Activated CD8-positive, alpha-beta T cell treated with anti-CD3 and anti-CD28 coated beads for 36 hours (primary cell): ENCODE measurements at regions of chr6 and their contacts with region 1.

Region 1: DNA sequence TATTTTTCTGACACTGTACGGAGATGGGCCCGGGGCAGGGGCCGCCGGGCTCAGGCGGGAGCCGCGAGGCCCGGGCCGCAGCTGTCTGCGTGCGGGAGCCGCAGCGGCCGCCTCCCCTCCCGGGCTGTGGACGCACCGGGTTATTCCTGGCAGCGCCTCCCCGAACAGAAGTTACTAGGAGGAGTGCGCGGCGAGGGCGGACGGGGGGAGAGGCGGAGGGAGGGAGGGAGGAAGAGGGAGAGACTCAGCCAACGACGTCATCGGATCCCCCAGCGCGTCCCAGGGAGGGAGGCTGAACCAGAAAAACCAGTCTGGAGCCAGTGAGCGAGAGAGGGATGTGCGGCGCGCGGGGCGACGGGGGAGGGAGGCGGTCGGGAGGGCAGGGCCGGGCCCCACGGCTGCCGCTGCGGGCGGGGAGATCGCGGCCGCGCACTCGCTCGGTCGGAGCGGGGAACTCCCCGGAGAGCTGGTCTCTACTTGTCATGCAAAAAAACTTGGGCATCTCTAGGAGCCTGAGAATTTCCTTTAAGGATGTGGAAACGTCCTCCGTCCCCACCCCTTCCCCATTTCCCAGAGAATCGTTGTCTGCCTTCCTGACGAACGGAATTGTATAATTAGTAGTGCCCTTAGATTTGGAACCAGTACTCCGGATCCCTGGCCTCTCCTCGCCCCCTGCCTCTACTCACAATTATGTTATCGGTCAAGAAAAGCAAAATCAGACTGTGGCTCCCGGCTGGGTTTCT is 1.4 kb upstream of the HIVEP2 start:
- DNase-seq: peak; percentile 93
- ATAC-seq: peak; percentile 32
- H3K4me3 Mint-ChIP-seq: peak overlapping the region; percentile 91
- H3K27ac Mint-ChIP-seq: peak overlapping the region; percentile 94
- H3K4me1 Mint-ChIP-seq: peaks cover 34% of the 10 kb centered on the region
- H3K27me3 Mint-ChIP-seq: peaks cover 2% of the 10 kb centered on the region
- CTCF ChIP-seq: no peak

Region 2: GRCh38 chr6:142692942-142693341 is 253.4 kb before region 1 on chr6:
- CTCF ChIA-PET with region 1: interaction called, 4 read pairs
- POLR2A ChIA-PET with region 1: no interaction called
- intact Hi-C with region 1: loop called (anchors 5 kb)
- DNase-seq: peak; percentile 73
- ATAC-seq: peak; percentile 84
- H3K4me3 Mint-ChIP-seq: no peak overlapping the region
- H3K27ac Mint-ChIP-seq: no peak overlapping the region
- H3K4me1 Mint-ChIP-seq: peaks cover 24% of the 10 kb centered on the region
- H3K27me3 Mint-ChIP-seq: no peaks in the 10 kb centered on the region
- CTCF ChIP-seq: peak; percentile 82

Region 3: DNA sequence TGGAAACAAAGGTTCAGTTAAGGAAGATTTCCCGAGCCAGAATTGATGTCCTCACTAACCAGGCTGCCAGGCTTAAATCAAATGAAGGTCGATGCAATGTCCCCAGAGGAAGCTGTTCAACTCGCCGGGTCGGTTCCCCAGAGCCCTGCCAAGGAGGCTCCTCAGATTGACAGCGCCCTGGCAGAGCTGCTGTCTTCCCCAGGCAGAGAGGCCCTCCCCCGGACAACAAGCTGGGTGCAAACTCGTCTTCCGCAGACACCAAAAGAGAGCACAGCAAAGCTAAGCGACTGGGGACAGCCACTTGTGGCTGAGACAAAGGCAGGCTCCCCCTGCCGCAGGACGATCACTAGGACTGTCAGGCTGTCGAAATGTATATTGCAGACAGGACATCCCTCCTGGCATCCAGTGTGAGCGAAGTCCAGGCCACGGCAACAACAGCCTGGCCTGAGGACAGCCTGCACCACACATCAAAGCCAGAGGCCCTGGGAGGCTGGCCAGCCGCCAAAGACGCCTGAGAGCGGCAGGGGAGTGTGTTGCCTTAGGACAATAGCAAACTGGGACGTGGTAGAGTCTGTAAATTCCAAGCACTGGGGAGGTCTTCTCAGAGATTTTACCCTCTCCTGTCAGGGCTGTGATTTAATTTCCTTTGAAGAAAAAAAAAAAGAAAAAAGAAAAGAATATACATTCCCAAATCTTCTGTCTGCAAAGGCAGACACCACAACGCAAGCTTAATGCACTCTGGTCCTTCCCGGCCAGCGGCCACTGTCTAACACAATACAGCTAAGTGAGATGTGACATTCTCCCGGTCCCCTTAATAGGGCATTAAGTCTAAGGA is 100.5 kb before region 1 on chr6:
- CTCF ChIA-PET with region 1: interaction called, 5 read pairs
- POLR2A ChIA-PET with region 1: interaction called, 11 read pairs
- intact Hi-C with region 1: loop called (anchors 2 kb)
- DNase-seq: peak; percentile 71
- ATAC-seq: peak; percentile 29
- H3K4me3 Mint-ChIP-seq: peak overlapping the region; percentile 67
- H3K27ac Mint-ChIP-seq: peak overlapping the region; percentile 92
- H3K4me1 Mint-ChIP-seq: peaks cover 88% of the 10 kb centered on the region
- H3K27me3 Mint-ChIP-seq: no peaks in the 10 kb centered on the region
- CTCF ChIP-seq: no peak

Region 4: DNA sequence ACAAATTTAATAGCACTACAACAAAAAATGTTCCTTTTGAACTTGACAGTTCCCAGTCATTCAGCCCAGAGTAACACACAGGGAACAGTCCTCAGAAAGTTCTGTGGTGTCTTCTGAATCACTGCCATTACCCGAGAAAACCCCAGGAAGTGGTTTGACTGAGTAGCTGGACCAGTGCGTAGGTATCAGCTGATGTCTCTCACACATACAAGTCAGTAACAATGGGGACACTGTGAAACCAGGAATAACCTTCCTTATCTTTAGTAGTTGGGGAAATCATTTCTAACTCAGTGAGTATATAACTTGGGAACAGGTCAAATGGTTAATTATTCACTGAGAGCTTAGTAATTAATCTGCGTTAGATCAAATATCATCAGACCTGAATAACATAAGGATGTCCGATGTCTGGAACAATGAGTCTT is 74.4 kb before region 1 on chr6:
- CTCF ChIA-PET with region 1: interaction called, 4 read pairs
- POLR2A ChIA-PET with region 1: interaction called, 11 read pairs
- intact Hi-C with region 1: no loop called
- DNase-seq: peak; percentile 79
- ATAC-seq: peak; percentile 91
- H3K4me3 Mint-ChIP-seq: peak overlapping the region; percentile 43
- H3K27ac Mint-ChIP-seq: peak overlapping the region; percentile 75
- H3K4me1 Mint-ChIP-seq: peaks cover 87% of the 10 kb centered on the region
- H3K27me3 Mint-ChIP-seq: no peaks in the 10 kb centered on the region
- CTCF ChIP-seq: no peak

Region 5: DNA sequence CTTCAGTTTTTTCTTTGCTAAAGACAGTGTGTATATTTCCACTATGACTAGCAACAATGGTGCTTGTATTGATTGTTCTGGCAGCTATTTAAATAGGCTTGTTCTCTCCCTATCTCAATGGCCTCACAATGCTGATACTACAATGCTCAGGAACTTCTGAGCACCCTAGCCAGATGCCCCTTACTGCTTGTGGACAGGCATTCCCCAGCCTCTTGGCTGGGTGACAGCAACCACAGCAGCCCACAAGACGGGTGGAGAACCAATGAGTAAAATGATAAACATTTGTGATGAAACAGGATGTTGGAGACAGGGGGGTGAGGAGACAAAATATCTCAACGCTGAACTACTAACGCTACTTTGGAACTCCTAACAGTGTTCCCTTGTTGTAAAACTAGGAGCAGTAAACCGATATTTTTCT is 43.7 kb before region 1 on chr6:
- CTCF ChIA-PET with region 1: interaction called, 3 read pairs
- POLR2A ChIA-PET with region 1: interaction called, 18 read pairs
- intact Hi-C with region 1: loop called (anchors 5 kb)
- DNase-seq: peak; percentile 90
- ATAC-seq: peak; percentile 61
- H3K4me3 Mint-ChIP-seq: peak overlapping the region; percentile 50
- H3K27ac Mint-ChIP-seq: peak overlapping the region; percentile 86
- H3K4me1 Mint-ChIP-seq: peaks cover 64% of the 10 kb centered on the region
- H3K27me3 Mint-ChIP-seq: no peaks in the 10 kb centered on the region
- CTCF ChIP-seq: no peak

Region 6: GRCh38 chr6:142926494-142927270 is 19.7 kb before region 1 on chr6:
- CTCF ChIA-PET with region 1: interaction called, 19 read pairs
- POLR2A ChIA-PET with region 1: interaction called, 85 read pairs
- intact Hi-C with region 1: loop called (anchors 1 kb)
- DNase-seq: peak; percentile 90
- ATAC-seq: peak; percentile 85
- H3K4me3 Mint-ChIP-seq: peak overlapping the region; percentile 96
- H3K27ac Mint-ChIP-seq: peak overlapping the region; percentile 97
- H3K4me1 Mint-ChIP-seq: peaks cover 55% of the 10 kb centered on the region
- H3K27me3 Mint-ChIP-seq: no peaks in the 10 kb centered on the region
- CTCF ChIP-seq: no peak

Region 7: GRCh38 chr6:143136647-143137046 is 190.3 kb after region 1 on chr6:
- CTCF ChIA-PET with region 1: no interaction called
- POLR2A ChIA-PET with region 1: no interaction called
- intact Hi-C with region 1: loop called (anchors 10 kb)
- DNase-seq: no peak
- ATAC-seq: no peak
- H3K4me3 Mint-ChIP-seq: no peak overlapping the region
- H3K27ac Mint-ChIP-seq: peak overlapping the region; percentile 89
- H3K4me1 Mint-ChIP-seq: peaks cover 50% of the 10 kb centered on the region
- H3K27me3 Mint-ChIP-seq: no peaks in the 10 kb centered on the region
- CTCF ChIP-seq: no peak